GM18951 (cell line): ENCODE measurements at regions of chr10 and their contacts with region 1.

Region 1: DNA sequence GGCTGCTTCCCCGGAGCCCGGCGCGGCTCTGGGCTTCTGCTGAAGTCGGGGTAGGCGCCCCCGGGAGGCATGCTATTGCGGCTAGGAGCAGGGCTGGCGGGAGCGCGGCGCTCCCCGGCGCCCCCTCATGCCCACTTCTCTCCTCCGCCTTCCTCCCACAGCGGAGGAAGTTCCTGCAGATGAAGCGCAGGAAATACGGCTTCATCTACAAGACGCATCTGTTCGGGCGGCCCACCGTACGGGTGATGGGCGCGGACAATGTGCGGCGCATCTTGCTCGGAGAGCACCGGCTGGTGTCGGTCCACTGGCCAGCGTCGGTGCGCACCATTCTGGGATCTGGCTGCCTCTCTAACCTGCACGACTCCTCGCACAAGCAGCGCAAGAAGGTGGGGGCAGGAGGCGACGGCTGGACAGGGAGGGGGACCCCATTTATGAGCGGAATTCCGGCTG is 479 bp downstream of the CYP26A1 start:
- POLR2A ChIP-seq: no peak

Region 2: GRCh38 chr10:93293999-93294398 is 219.8 kb after region 1 on chr10:
- in situ Hi-C with region 1: loop called (anchors 10 kb)
- POLR2A ChIP-seq: no peak

Region 3: DNA sequence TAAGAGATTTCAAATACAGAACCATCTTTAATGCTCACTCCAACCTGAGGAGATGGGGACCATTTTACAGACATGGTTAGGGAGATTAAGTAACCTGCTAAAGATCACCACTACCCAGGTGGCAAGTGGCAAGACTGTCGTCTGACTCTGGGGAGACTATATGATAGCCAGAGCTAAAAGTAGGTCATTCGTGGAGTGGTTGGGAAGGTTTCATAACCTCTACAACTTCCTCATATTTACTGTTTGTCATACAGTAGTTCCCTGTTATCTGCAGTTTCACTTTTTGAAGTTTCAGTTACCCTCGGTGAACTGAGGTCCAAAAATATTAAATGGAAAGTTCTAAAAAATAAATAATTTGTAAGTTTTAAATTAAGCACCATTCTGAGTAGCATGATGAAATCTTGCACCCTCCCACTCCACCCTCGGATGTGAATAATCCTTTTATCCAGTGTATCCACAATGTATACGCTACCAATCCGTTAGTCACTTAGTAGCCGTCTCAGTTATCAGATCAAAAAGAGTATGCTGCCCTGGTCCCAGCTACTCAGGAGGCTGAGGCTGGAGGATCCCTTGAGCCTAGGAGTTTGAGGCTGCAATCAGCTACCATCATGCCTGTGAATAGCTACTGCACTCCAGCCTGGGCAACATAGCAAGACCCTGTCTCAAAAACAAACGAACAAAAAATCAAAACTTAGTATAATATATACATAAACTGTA is 668.6 kb after region 1 on chr10:
- in situ Hi-C with region 1: no loop called
- POLR2A ChIP-seq: no peak